ENCODE measurements at regions of chr4 and their contacts with region 1.

Region 1: DNA sequence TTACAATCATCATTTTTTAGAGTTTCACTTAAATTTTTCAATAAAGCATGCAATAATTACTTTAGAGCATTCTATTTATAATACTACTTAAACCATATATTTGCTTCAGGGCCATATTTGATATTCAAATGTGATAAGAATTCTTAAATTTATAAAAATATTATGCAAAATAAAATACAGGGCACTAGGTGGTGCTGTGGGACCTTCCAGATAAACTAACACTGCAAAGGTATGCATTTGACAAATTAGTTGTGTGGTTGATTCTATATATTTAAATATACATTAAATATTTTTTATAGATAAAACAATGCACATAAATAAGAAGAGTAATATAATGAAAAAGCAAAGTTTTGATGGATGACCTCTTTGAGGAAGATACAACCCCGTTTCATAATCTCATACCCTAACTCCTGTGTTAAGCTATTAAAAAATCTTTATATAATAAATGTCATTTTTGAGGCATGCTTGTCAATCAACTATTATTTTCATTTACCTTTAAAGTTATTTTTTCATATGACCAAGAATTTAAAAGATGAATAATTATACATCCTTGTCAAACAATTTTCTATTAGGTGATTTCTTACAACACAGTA is 128.4 kb downstream of the REELD1 start:
- DNase-seq: no peak
- H3K4me3 ChIP-seq: no peak overlapping the region
- H3K27ac ChIP-seq: no peak overlapping the region
- H3K27me3 ChIP-seq: no peaks in the 10 kb centered on the region
- CTCF ChIP-seq: peak; percentile 68

Region 2: GRCh38 chr4:146329042-146329716 is 13.5 kb before region 1 on chr4:
- CTCF ChIA-PET with region 1: interaction called, 17 read pairs
- POLR2A ChIA-PET with region 1: no interaction called
- DNase-seq: peak; percentile 38
- H3K4me3 ChIP-seq: no peak overlapping the region
- H3K27ac ChIP-seq: peak overlapping the region; percentile 77
- H3K27me3 ChIP-seq: no peaks in the 10 kb centered on the region
- CTCF ChIP-seq: no peak

Region 3: DNA sequence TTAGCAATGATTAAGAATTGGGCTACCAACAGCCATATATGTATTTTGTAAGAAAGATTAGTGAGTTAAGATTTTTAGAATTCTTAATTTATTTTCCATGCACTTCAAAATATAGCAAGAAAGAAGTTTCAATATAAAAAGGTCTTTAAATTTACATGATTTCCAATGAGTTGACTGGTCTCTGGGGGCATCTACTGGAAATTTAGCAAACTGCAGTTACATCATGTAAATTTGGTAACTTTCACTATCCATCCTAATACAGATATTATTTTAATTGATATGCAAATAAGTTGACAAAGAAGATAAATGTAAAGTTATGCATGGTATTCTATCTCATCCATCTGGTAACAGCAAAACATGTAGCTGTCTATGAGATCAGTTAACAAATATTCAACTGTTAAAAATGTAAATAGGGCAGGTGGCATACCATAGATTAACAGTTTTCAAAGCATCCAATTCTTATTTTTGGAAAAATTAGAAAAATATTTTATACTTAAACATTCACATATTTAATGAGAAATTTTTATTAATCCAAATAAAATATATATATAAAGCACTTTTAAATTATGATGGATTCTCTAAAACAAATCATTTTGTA is 573.9 kb after region 1 on chr4:
- CTCF ChIA-PET with region 1: interaction called, 15 read pairs
- POLR2A ChIA-PET with region 1: no interaction called
- DNase-seq: peak; percentile 11
- H3K4me3 ChIP-seq: no peak overlapping the region
- H3K27ac ChIP-seq: no peak overlapping the region
- H3K27me3 ChIP-seq: no peaks in the 10 kb centered on the region
- CTCF ChIP-seq: peak; percentile 74

Measured in AG04450 (cell line).